ENCODE measurements at regions of chr5 and their contacts with region 1.

Region 1: DNA sequence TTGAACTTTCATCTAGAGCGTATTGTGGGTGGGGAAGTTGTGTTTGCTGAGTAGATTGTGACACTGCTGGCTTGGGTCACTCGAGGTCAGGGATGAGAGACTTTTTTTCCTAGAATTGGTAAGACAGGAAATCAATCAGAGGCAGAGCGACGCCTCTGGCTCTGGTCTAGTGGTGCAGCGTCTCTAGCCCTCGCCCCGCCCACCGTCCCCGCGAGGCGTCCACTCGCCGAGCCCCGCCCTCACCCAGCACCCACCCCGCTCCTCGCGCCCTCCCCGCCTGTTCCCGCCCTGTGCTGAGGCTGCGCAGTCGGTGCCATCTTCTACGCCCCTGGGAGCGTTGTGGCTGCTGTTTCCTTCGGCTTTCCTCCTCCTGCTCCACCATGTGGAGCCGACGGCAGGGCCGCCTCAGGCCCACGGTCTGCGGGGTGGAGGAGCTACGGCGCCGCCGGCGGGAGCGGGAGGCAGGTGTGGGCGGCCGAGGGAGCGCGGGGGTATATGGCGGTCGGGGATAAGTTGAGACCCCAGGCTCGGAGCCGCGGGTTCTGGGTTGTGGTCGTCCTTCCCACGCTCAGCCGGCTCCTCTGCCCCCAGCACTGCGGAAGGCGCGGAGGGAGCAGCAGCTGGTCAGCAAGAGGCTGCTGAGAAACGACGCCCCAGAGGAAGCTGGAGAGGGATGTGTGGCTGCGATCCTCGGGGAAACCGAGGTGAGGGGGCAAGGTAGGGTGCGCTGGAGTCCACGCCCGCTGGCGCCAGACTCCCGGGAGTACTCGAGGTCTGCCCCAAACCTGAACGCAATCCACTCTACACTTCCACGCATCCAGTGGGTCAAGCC is at the start of gene TMCO6:
- DNase-seq: peak; percentile 97 to 98 (median 98)
- H3K4me3 ChIP-seq: peak within 1 kb of the TSS; percentile 82
- H3K27ac ChIP-seq: peak within 1 kb of the TSS; percentile 40 to 84
- H3K4me1 ChIP-seq: no peaks in the 10 kb centered on the region
- H3K27me3 ChIP-seq: no peaks in the 10 kb centered on the region
- CTCF ChIP-seq: peak; percentile 57 to 83 (median 66)
- EP300 ChIP-seq: no peak
- POLR2A ChIP-seq: peak; percentile 19
- total RNA-seq, gene TMCO6: 12.2 to 62.8 (median 14.9) TPM

Region 2: DNA sequence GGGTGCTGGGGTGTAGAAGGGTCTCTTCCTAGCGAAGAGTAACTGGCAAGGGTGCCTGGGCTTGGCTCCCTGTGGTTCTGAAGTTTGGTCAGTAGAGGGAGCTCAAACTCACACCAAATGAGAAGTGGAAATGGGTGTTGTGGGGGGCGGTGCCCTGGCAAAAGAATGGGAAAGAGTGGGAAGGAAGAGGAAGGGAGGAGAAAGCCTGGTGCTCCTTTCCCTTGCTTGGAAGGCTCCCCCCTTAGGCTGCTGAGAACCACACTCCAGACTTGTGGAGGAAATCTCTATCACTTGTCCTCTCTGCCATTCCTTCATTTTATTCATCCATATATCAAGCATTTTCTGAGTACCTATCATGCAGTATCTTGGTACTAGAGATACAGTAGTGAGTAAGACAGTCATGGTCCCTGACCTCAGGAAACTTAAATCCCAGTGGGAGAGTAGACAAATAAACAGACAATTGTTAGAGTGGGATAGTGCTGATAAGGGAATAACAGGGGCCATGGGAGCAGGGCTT is 266.3 kb before region 1 on chr5:
- intact Hi-C with region 1: loop called in 1 of 4 experiments (anchors 10 kb)
- DNase-seq: peak; percentile 65 to 82 (median 76)
- H3K4me3 ChIP-seq: no peak overlapping the region
- H3K27ac ChIP-seq: no peak overlapping the region
- H3K4me1 ChIP-seq: no peaks in the 10 kb centered on the region
- H3K27me3 ChIP-seq: no peaks in the 10 kb centered on the region
- CTCF ChIP-seq: peak; percentile 50 to 81 (median 65)
- EP300 ChIP-seq: no peak
- POLR2A ChIP-seq: no peak

Region 3: DNA sequence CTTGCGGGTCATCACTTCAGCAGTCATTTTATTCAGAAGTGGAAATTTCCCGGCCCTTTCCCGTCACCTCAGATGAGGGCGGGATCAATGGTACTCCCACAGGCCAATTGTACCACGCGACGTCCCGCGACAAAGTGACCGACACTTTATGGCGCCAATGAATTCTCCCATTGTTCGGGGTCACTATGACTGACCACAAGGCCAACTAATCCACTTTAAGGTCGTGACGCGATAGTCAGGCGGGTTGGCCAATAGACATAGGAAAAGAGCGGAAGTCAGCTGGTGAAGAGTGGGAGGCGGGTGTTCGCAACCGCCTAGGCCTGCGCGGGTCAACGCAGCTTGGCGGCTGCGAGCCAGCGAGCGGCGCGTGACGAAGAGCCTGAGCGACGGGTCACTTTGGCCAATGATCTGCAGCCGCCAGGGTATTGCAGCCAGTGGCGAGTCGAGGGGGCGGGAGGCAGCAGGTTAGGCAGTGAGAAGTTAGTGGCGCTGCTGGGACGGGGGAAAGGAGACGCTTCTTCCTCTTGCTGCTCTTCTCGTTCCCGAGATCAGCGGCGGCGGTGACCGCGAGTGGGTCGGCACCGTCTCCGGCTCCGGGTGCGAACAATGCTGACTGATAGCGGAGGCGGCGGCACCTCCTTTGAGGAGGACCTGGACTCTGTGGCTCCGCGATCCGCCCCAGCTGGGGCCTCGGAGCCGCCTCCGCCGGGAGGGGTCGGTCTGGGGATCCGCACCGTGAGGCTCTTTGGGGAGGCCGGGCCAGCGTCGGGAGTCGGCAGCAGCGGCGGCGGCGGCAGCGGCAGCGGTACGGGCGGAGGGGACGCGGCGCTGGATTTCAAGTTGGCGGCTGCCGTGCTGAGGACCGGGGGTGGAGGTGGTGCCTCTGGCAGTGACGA is 237.8 kb before region 1 on chr5 and contains the start of gene ANKHD1:
- intact Hi-C with region 1: loop called in 2 of 4 experiments (anchors 5 to 10 kb)
- DNase-seq: peak; percentile 98 to 99 (median 98)
- H3K4me3 ChIP-seq: peak within 1 kb of the TSS; percentile 100
- H3K27ac ChIP-seq: peak within 1 kb of the TSS; percentile 81 to 91
- H3K4me1 ChIP-seq: peaks cover 19% of the 10 kb centered on the region
- H3K27me3 ChIP-seq: no peaks in the 10 kb centered on the region
- CTCF ChIP-seq: peak in 1 of 3 donors; percentile 22
- EP300 ChIP-seq: peak; percentile 90
- POLR2A ChIP-seq: peak; percentile 94
- total RNA-seq, gene ANKHD1: 72.0 to 141 (median 119) TPM

Region 4: DNA sequence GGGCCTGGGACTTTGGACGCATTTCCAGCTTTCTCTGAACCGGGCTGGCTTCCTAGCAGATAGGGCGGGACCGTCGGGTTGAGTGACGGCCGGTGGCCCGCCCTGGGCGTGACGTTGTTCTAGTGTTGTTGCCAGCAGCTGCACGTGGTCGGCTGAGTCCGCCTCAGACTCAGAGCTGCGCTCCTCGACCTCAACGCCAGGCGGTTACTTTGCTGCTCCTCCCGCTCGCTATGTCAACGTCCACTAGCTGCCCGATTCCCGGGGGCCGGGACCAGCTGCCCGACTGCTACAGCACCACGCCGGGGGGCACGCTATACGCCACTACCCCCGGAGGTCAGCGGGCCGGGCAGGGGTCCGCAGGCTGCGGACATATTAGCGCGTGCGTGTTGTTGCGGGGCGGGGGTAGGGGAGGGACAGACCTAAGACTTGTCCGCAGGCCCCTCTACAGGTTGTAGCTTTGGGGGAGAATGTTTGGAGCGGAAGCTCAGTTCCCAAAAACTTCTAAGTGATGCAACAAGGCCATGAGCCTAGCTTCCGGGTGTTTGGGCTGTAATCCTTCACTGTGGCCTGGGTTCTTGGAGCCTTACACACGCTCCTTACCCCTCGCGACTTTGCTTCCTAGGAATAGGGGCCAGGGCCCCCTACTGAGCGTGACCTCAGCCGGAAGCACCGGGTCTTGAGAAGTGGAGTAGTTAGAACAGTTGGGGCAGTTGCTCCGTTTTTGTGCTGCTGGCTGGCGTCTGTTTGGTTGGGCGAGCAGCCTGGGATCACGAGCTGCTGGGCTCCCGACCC is 91.7 kb before region 1 on chr5 and contains the start of gene EIF4EBP3:
- intact Hi-C with region 1: loop called in 1 of 4 experiments (anchors 5 kb)
- DNase-seq: peak; percentile 97 to 99 (median 98)
- H3K4me3 ChIP-seq: peak within 1 kb of the TSS; percentile 48
- H3K27ac ChIP-seq: peak within 1 kb of the TSS; percentile 91 to 96
- H3K4me1 ChIP-seq: peaks cover 15% of the 10 kb centered on the region
- H3K27me3 ChIP-seq: no peaks in the 10 kb centered on the region
- CTCF ChIP-seq: peak; percentile 68 to 97 (median 92)
- EP300 ChIP-seq: peak; percentile 35
- POLR2A ChIP-seq: peak; percentile 90
- total RNA-seq, gene EIF4EBP3: 8.6 to 23.6 (median 17.8) TPM

Region 5: DNA sequence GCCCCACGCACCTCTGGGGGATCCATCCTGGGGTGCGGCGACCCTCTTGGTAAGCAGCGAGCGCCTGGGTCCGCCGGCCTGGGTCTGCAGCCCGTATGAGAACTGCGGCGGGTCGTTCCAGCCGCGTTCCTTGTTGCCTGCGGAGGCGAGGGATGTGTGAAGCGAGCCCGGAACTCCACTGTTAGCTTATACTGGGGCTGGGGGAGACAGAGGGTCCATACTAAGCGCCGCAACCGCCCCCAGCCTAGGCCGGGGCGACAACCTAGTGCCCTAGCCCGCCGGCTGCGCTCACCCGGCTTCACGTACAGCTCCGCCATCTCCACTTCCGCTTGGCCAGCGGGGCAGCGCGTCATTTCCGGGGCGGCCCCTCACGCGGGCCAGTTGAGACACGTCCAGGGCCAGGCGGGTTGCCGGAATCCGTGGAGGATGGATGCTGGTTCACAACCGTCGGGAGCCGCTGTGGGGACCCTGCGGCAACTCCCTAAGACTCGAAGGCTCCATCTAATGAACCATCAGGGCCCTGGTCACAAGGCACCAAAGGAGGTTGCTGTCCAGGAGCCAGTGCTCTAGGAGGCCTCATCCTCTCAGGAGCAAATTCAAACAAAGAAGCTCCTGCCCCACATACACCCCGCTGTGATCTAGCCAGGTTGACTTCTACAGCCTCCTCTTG is 82.1 kb before region 1 on chr5 and contains the start of gene SRA1:
- intact Hi-C with region 1: loop called (anchors 5 to 10 kb)
- DNase-seq: peak; percentile 89 to 96 (median 94)
- H3K4me3 ChIP-seq: peak within 1 kb of the TSS; percentile 89
- H3K27ac ChIP-seq: peak within 1 kb of the TSS; percentile 34 to 74
- H3K4me1 ChIP-seq: peaks cover 5% of the 10 kb centered on the region
- H3K27me3 ChIP-seq: no peaks in the 10 kb centered on the region
- CTCF ChIP-seq: no peak
- EP300 ChIP-seq: peak; percentile 41
- POLR2A ChIP-seq: peak; percentile 96
- total RNA-seq, gene SRA1: 11.7 to 34.4 (median 20.1) TPM

Region 6: GRCh38 chr5:140564196-140565023 is 75.0 kb before region 1 on chr5 and contains the starts of genes APBB3 and SLC35A4:
- intact Hi-C with region 1: loop called (anchors 5 to 10 kb)
- DNase-seq: peak; percentile 95 to 97 (median 97)
- H3K4me3 ChIP-seq: peak within 1 kb of the TSS; percentile 79
- H3K27ac ChIP-seq: peak within 1 kb of the TSS; percentile 87 to 95
- H3K4me1 ChIP-seq: peaks cover 9% of the 10 kb centered on the region
- H3K27me3 ChIP-seq: no peaks in the 10 kb centered on the region
- CTCF ChIP-seq: peak in 1 of 3 donors; percentile 34
- EP300 ChIP-seq: peak; percentile 41
- POLR2A ChIP-seq: peak; percentile 91
- total RNA-seq, gene APBB3: 33.0 to 47.6 (median 39.5) TPM
- total RNA-seq, gene SLC35A4: 22.3 to 65.7 (median 47.1) TPM